ENCODE measurements at regions of chr11 and their contacts with region 1.

Region 1: DNA sequence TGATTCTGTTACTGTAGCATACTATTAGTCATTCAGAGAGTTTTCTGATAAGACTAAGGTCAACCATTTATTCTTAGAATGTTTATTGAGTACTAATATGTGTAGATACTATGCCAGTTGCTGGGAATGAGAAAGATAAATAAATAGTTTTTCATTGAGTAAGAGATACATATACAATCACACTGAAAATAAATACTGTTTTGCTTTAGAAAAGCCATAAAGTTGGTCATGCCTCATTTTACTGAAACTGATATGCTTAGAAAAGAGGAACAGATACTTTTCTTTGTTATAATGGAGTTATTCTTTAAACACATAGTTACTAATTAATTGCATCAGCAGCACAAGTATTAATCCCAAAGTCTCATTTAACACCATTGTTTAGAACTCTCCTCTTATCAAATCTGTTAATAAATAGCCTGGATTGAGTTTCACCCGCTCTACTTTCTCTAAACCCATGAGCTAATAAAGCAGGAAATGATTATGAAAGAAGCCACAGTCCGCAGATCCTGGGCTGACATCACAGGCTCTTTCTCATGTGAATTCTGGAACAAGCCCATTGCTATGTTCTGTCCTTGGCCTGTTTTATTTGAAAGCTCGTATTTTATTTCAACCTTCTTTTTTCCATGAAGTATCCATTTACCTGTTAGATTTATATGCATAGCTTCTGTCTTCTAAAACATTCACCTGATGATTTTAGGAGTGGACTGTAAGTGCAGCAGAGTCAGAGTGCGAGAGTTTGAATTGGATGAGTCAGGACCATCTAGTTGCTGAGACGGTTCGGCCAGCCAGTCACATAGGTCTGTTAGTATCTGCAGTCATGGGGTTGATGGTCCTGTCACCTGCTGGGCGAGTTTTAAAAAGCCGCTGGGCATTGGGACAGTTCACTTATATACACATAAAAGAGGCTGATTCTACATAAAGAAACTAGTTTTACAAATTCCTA is 35.5 kb downstream of the PIWIL4 start:
- DNase-seq: peak; percentile 66 to 80
- H3K4me3 ChIP-seq: no peak overlapping the region
- H3K27ac ChIP-seq: peak overlapping the region; percentile 27; the same call in 1 of the 2 replicates
- H3K4me1 ChIP-seq: peaks cover 11% of the 10 kb centered on the region; the same call in 1 of the 2 replicates
- H3K27me3 ChIP-seq: no peaks in the 10 kb centered on the region
- CTCF ChIP-seq: peak; percentile 74

Region 2: DNA sequence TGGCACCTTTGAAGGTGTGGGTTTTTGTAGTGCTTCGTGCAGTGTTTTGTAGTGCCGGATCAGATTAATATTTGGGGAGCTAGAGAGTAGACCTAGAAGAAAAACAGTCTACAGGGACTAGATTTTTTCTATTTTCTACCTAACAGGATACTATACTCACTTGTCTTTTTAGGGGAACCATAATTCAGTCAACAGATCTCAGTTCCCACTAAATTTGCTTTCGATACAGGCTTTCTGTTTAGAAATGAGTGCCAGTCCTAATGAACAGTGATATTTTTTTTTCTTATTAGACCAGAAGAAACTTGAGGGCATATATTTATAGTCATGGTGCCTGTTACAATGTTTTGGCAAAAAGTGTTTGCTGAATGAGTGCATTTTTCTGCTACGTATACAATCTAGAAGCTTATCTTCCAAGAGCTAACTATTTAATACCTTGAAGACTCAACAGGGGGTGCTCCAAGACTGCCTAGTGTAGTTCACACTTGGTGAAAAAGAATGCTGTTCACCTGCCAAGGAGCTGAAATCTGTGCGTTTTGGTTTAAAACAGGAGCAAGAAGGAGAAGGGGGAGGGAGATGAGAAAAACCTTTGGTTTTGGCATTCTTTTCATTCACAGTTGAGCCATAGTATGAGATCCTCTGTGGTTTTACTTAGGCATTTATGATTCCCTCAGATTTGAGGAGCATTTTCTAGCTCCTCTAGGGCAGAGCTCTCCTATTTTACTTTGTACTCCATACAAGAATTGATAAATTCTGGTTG is 707.4 kb before region 1 on chr11:
- CTCF ChIA-PET with region 1: no interaction called
- POLR2A ChIA-PET with region 1: no interaction called
- intact Hi-C with region 1: loop called (anchors 5 kb)
- DNase-seq: peak; percentile 18 to 69
- H3K4me3 ChIP-seq: no peak overlapping the region
- H3K27ac ChIP-seq: no peak overlapping the region
- H3K4me1 ChIP-seq: no peaks in the 10 kb centered on the region
- H3K27me3 ChIP-seq: no peaks in the 10 kb centered on the region
- CTCF ChIP-seq: peak; percentile 94

Region 3: DNA sequence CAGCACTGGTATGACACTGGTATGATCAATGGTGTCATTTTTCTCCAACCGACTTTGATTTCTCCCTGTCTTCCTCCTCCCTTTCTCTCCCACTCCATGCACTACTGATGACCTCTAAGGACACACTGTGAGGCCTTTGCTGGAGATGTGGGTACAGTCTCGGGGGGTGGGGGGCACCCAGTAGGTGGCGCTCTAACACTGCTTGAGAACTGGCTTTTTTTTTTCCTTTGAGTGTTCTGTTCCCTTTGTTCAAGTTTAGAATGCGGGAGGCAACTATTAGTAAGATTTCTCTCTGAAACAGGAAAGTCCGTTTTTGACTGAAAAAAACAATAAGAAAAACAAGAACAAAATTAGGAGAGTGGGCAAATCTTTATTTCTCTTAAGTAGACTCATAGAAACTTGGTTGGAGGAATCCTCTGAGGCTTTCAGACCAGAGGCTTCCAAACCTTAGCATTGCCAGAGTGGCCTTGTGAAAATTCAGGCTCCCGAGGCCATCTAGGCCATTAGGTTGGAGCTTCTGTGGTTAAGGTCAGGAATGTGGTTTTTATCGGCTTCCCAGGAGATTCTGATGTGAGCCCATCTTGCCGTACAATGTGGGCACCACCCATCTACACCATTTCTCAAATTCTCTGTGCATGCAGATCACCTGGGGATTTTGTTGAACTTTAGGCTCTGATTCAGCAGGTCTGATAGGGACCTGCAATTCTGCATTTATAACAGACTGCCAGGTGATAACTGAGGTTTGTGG is 430.8 kb before region 1 on chr11:
- CTCF ChIA-PET with region 1: no interaction called
- POLR2A ChIA-PET with region 1: no interaction called
- intact Hi-C with region 1: loop called (anchors 5 kb)
- DNase-seq: peak in 1 of 2 experiments; percentile 35
- H3K4me3 ChIP-seq: no peak overlapping the region
- H3K27ac ChIP-seq: no peak overlapping the region
- H3K4me1 ChIP-seq: no peaks in the 10 kb centered on the region
- H3K27me3 ChIP-seq: no peaks in the 10 kb centered on the region
- CTCF ChIP-seq: peak; percentile 93

Region 4: GRCh38 chr11:94519478-94520084 is 83.1 kb before region 1 on chr11:
- CTCF ChIA-PET with region 1: interaction called, 4 read pairs
- POLR2A ChIA-PET with region 1: no interaction called
- intact Hi-C with region 1: loop called (anchors 2 kb)
- DNase-seq: peak in 1 of 2 experiments; percentile 46
- H3K4me3 ChIP-seq: no peak overlapping the region
- H3K27ac ChIP-seq: no peak overlapping the region
- H3K4me1 ChIP-seq: no peaks in the 10 kb centered on the region
- H3K27me3 ChIP-seq: no peaks in the 10 kb centered on the region
- CTCF ChIP-seq: peak; percentile 91